Mammary epithelial cell (primary cell): ENCODE measurements at regions of chr2 and their contacts with region 1.

Region 1: DNA sequence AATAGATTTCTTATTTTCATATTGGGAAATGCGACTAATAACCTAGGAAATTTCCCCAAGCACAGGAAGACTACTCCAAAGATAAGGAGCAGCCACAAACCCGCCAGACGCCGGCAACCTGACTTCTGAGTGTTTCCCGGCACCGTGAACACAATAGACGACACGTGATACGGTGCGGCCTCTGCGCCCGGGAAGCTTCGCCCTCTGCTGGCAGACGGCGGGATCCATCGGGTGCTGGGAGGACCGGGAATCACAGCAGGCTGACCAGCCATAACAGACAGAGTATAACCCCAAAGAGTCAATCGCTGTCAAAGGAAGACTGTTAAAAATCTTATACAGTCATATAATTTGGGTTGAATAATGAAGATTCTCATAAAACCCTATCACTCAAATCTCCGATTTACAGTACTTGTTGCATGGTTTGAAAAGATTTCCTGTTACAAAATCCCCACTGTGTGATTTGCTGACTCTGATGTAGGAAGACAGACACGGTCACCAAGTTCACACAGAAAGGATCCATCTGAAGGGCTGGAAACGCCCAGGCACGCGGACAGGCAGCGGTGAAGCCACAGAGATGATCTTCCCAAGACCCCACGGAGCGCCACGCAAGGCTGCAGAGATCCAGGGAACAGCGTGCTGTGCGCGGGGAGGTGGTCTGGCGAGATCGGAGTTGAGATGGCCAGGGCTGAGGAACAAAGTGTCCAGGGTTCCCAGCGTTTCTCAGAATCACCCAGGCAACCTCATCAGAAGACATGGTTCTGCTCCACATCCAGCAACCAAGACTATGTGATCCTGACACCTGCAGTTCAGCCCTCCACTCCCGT is 73.8 kb downstream of the EIPR1 start:
- DNase-seq: peak; percentile 63
- H3K4me3 ChIP-seq: peak overlapping the region in 1 of 3 experiments; percentile 2
- H3K27ac ChIP-seq: no peak overlapping the region
- H3K4me1 ChIP-seq: peaks cover 7% of the 10 kb centered on the region
- H3K27me3 ChIP-seq: no peaks in the 10 kb centered on the region
- CTCF ChIP-seq: peak; percentile 89 to 94

Region 2: GRCh38 chr2:1886405-1886992 is 1417.3 kb before region 1 on chr2:
- CTCF ChIA-PET with region 1: no interaction called
- dilution Hi-C with region 1: no loop called
- in situ Hi-C with region 1: no loop called
- intact Hi-C with region 1: loop called (anchors 1 kb)
- DNase-seq: peak; percentile 19
- H3K4me3 ChIP-seq: no peak overlapping the region
- H3K27ac ChIP-seq: no peak overlapping the region
- H3K4me1 ChIP-seq: no peaks in the 10 kb centered on the region
- H3K27me3 ChIP-seq: no peaks in the 10 kb centered on the region
- CTCF ChIP-seq: peak; percentile 30 to 43

Region 3: GRCh38 chr2:2743164-2743571 is 560.6 kb before region 1 on chr2:
- CTCF ChIA-PET with region 1: no interaction called
- dilution Hi-C with region 1: no loop called
- in situ Hi-C with region 1: no loop called
- intact Hi-C with region 1: loop called (anchors 10 kb)
- DNase-seq: peak; percentile 79
- H3K4me3 ChIP-seq: no peak overlapping the region
- H3K27ac ChIP-seq: no peak overlapping the region
- H3K4me1 ChIP-seq: peaks cover 41% of the 10 kb centered on the region
- H3K27me3 ChIP-seq: no peaks in the 10 kb centered on the region
- CTCF ChIP-seq: no peak

Region 4: DNA sequence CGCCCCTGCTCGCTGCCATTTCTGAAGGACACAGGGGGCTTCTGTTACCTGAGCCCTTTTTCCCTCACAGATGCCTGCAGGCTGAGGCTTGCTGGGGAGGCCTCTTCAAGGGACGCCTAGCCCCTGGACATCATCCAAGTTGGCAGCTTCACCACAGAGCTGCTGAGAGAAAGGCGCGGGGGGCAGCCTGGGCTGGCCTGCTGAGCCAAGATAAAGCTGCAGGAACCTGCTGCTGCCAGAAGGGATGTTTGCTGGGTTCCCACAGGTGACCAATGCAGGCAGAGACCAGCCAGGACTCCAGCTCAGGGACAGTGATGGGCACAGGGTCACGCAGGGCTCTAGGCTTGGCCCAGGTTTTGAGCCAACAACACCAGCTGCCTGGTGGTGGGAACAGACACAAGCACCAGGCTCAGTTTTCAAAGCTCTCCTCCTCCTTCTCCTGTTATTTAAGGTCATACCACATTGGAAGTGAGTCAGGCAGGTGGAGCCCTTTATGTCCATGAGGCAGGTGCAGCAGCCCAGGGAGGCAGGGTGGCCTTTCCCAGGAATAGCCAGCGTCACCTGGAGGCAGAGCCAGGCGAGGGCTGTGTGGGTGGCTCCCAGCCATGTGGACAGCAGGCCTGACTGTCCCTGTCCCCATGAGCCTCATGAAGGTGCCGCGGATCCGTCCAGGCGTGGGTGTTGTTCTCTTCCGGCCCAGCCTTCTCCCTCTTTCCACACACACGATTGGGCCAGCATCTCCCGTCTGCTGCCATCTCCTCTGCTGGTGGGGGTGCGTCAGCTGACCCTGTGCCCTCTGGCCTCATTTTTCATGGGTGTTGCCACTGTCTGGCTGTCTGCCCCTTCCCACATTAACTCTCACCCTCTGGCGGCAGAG is 457.2 kb before region 1 on chr2:
- CTCF ChIA-PET with region 1: no interaction called
- dilution Hi-C with region 1: no loop called
- in situ Hi-C with region 1: no loop called
- intact Hi-C with region 1: loop called (anchors 10 kb)
- DNase-seq: peak; percentile 5
- H3K4me3 ChIP-seq: no peak overlapping the region
- H3K27ac ChIP-seq: no peak overlapping the region
- H3K4me1 ChIP-seq: no peaks in the 10 kb centered on the region
- H3K27me3 ChIP-seq: no peaks in the 10 kb centered on the region
- CTCF ChIP-seq: no peak

Region 5: DNA sequence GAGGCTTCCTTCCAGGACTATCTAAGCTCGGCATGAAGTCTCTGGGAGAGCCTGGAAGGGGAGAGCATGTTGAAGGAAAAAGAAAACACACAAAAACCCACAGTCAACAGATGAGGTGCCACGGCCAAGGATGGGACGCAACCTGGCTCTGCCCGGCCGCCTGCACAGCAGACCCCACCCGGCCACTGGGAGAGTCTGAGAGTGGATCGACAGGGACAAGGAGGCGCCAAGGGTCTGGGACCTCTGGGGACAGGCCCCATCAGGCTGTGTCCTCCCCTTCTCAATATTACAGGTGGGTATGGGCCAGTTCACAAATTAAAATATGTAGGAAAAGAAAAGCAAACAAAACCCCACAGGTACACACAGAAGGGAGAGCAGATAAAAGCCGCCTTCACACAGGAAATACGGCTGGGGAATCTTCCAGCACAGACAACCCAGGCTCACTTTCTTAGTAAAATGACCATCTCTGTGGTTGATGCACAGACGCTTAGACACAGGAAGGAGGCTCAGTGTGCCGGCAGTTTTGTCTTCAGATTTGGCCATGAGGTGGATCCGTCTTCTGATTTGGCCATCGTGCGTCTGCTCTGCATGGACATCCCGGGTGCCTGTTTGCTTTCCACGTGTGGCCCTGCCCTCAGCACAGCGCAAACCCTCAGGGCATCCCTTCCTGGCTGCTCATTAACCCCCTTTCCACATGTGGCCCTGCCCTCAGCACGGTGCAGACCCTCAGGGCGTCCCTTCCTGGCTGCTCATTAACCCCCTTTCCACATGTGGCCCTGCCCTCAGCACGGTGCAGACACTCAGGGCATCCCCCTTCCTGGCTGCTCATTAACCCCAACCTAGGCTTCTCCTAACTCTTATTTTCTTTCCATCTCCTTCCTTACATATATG is 64.6 kb before region 1 on chr2:
- CTCF ChIA-PET with region 1: no interaction called
- dilution Hi-C with region 1: loop called (anchors 5 kb)
- in situ Hi-C with region 1: no loop called
- intact Hi-C with region 1: no loop called
- DNase-seq: no peak
- H3K4me3 ChIP-seq: no peak overlapping the region
- H3K27ac ChIP-seq: no peak overlapping the region
- H3K4me1 ChIP-seq: peaks cover 6% of the 10 kb centered on the region
- H3K27me3 ChIP-seq: no peaks in the 10 kb centered on the region
- CTCF ChIP-seq: no peak